ENCODE measurements at regions of chr6 and their contacts with region 1.

Region 1: GRCh38 chr6:61989616-61990015 is 296.4 kb downstream of the KHDRBS2 start:
- DNase-seq: no peak
- ATAC-seq: no peak
- H3K4me3 ChIP-seq: no peak overlapping the region
- H3K27ac ChIP-seq: no peak overlapping the region
- H3K4me1 ChIP-seq: no peaks in the 10 kb centered on the region
- H3K27me3 ChIP-seq: no peaks in the 10 kb centered on the region
- CTCF ChIP-seq: no peak
- EP300 ChIP-seq: no peak
- POLR2A ChIP-seq: no peak
- RAD21 ChIP-seq: no peak

Region 2: GRCh38 chr6:61675734-61676133 is 313.9 kb before region 1 on chr6:
- CTCF ChIA-PET with region 1: no interaction called
- POLR2A ChIA-PET with region 1: no interaction called
- in situ Hi-C with region 1: no loop called
- intact Hi-C with region 1: no loop called
- DNase-seq: no peak
- ATAC-seq: no peak
- H3K4me3 ChIP-seq: no peak overlapping the region
- H3K27ac ChIP-seq: no peak overlapping the region
- H3K4me1 ChIP-seq: no peaks in the 10 kb centered on the region
- H3K27me3 ChIP-seq: no peaks in the 10 kb centered on the region
- CTCF ChIP-seq: no peak
- EP300 ChIP-seq: no peak
- POLR2A ChIP-seq: no peak
- RAD21 ChIP-seq: no peak

Region 3: GRCh38 chr6:61953851-61954250 is 35.8 kb before region 1 on chr6:
- CTCF ChIA-PET with region 1: no interaction called
- POLR2A ChIA-PET with region 1: no interaction called
- in situ Hi-C with region 1: no loop called
- intact Hi-C with region 1: no loop called
- DNase-seq: no peak
- ATAC-seq: no peak
- H3K4me3 ChIP-seq: no peak overlapping the region
- H3K27ac ChIP-seq: no peak overlapping the region
- H3K4me1 ChIP-seq: no peaks in the 10 kb centered on the region
- H3K27me3 ChIP-seq: no peaks in the 10 kb centered on the region
- CTCF ChIP-seq: no peak
- EP300 ChIP-seq: no peak
- POLR2A ChIP-seq: no peak
- RAD21 ChIP-seq: no peak

Region 4: DNA sequence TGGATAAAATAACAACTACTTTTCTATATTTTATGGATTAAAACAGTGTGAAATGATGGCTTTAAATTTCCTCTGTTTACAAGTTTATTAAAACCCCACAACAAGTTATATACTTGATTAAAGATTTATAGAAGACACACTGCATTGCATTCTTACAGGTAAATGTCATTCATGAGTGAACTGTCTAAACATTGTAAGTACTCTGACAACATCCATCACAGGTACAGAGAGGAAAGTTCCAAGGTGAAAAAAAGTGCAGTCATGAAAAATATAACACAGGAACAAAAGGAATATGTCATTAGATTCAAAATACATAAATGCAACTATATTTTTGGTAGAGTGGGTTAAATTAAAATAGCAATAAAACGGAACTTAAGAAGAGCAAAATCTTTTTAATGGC is 139.5 kb after region 1 on chr6:
- CTCF ChIA-PET with region 1: no interaction called
- POLR2A ChIA-PET with region 1: no interaction called
- in situ Hi-C with region 1: no loop called
- intact Hi-C with region 1: loop called (anchors 1 kb)
- DNase-seq: no peak
- ATAC-seq: no peak
- H3K4me3 ChIP-seq: no peak overlapping the region
- H3K27ac ChIP-seq: no peak overlapping the region
- H3K4me1 ChIP-seq: no peaks in the 10 kb centered on the region
- H3K27me3 ChIP-seq: no peaks in the 10 kb centered on the region
- CTCF ChIP-seq: no peak
- EP300 ChIP-seq: no peak
- POLR2A ChIP-seq: no peak
- RAD21 ChIP-seq: no peak